Posterior cingulate gyrus (tissue), 11 donors: ENCODE measurements at regions of chr4 and their contacts with region 1.

Region 1: GRCh38 chr4:48963042-48963679 is 22.9 kb upstream of the CWH43 start:
- DNase-seq: peak in 8 of 10 donors; percentile 27 to 92 (median 68)

Region 2: DNA sequence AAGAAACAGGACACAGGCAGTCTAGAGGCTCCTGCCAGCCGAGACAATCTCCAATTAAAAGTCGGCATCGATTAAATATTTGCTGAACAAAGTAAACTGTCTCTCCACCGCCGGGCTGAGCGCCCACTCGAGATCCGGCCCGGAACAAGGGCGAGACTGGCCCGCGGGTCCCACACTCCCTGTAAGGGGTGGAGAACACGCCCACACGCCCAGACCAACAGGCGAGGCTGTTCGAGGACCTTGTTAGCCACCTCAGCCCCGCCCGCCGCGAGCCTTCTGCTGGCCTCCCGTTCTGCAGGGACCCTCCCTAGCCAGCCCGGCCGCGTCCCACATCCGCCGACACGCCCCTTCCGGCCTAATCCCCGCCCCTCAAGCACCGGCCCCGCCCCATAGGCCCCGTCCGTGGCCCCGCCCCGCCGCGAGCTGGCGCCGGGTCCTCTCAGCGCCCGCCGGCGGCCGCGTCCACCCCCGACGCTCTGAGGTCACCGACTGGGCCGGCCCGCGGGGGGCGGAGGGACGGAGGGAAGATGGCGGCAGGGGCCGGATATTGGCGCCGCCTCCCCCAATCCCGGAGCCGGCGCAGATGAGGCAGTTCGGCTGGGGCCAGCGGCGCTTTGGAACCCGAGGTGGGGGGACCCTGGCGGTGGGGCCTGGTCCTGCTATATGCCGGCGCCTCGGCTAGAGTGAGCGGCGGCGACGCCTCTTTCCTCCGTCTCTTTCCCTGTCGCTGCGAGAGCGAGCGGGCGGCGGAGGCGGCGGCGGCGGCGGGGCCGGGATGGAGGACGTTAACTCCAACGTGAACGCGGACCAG is 622.0 kb before region 1 on chr4 and contains the start of gene SLAIN2:
- intact Hi-C with region 1: loop called (anchors 10 kb)
- DNase-seq: peak; percentile 96 to 100 (median 98)

Region 3: GRCh38 chr4:48445704-48446103 is 517.5 kb before region 1 on chr4:
- intact Hi-C with region 1: loop called (anchors 2 kb)
- DNase-seq: no peak

Region 4: GRCh38 chr4:48578132-48578968 is 384.8 kb before region 1 on chr4:
- intact Hi-C with region 1: loop called (anchors 1 kb)
- DNase-seq: peak in 5 of 10 donors; percentile 18 to 66 (median 51)